Activated CD4-positive, alpha-beta memory T cell treated with anti-CD3 and anti-CD28 coated beads for 36 hours (primary cell): ENCODE measurements at regions of chr6 and their contacts with region 1.

Region 1: DNA sequence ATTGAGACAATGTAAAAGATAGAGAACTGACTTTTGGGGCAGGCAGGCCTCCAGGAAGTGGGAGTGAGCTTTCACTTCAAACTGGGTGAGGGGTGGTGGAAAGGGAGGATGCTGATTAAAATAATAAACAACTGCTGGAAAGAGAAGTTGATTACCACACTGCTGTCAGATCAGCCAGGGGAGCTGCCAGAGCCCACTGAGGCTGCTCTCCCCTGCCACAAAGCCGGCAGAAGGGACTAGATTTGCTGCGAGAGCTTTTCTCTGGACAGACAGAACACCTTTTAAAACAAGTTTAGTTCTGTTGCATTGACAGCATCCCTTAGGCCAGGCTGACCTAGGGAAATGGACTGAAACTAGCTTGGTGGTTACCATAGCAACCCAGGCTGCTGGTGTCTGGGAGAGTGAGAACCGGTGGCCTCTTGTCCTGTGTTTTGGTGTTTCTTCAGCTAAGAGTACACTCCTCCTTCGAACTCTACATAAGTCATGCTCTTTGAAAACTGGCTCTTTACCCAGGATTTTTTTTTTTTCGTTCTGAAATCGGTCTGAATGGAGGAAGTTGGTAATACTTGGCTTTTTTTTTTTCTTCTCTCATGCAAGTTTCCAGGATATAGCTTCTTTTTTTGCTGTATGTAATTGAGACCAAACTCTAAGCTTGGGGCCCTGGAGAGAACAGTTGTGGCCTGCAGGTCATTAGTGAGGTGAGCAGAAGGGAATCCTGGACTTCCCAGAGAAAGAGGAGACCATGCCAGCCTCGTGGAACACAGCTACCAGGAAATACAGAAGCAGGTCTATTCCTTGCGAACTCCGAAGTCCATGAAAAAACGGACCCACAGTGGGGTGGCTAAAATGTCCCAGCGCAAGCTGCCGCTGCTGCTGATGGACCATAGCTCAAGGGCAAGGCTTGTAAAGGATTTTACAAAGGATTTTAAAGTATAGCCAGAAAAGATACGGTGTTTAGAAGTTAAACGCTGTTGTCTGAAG is 374.4 kb downstream of the UTRN start:
- DNase-seq: peak; percentile 19
- H3K4me3 Mint-ChIP-seq: peak overlapping the region; percentile 52
- H3K27ac Mint-ChIP-seq: peak overlapping the region; percentile 81
- H3K4me1 Mint-ChIP-seq: peaks cover 64% of the 10 kb centered on the region
- H3K27me3 Mint-ChIP-seq: no peaks in the 10 kb centered on the region

Region 2: DNA sequence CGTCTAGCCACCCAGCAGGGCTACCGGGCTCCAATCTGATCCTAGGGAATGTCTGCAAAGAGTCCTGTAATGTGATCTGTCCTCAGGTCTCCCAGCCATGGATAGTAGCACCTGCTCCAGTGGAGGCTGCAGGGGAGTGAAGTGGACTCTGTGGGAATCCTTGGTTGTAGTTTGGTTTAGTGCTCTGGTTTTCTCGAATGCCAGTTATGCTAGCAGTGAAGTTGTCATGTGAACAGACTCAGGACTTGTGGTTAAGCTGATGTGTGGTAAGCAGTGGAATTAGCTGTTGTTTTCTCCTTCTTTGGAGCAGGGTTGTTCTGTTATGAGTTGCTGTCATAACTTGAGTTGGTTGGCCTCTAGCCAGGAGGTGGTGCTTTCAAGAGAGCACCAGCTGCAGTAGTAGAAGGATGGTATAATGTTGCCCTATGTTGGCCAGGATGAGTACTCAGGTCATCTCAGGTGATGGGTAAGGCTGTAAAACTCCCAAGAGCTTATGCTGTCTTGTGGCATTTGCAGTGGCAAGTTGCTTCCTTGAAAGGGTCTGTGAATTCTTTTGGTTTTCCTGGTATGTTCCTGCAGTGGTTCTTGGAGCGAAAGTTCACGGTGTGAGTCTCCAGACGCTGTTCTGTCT is 15.9 kb after region 1 on chr6:
- CTCF ChIA-PET with region 1: interaction called, 4 read pairs
- POLR2A ChIA-PET with region 1: no interaction called
- intact Hi-C with region 1: loop called (anchors 2 kb)
- DNase-seq: peak; percentile 66
- H3K4me3 Mint-ChIP-seq: no peak overlapping the region
- H3K27ac Mint-ChIP-seq: no peak overlapping the region
- H3K4me1 Mint-ChIP-seq: peaks cover 19% of the 10 kb centered on the region
- H3K27me3 Mint-ChIP-seq: no peaks in the 10 kb centered on the region

Region 3: GRCh38 chr6:144689503-144690075 is 30.1 kb after region 1 on chr6:
- CTCF ChIA-PET with region 1: no interaction called
- POLR2A ChIA-PET with region 1: no interaction called
- intact Hi-C with region 1: no loop called
- DNase-seq: no peak
- H3K4me3 Mint-ChIP-seq: no peak overlapping the region
- H3K27ac Mint-ChIP-seq: no peak overlapping the region
- H3K4me1 Mint-ChIP-seq: peaks cover 10% of the 10 kb centered on the region
- H3K27me3 Mint-ChIP-seq: no peaks in the 10 kb centered on the region

Region 4: DNA sequence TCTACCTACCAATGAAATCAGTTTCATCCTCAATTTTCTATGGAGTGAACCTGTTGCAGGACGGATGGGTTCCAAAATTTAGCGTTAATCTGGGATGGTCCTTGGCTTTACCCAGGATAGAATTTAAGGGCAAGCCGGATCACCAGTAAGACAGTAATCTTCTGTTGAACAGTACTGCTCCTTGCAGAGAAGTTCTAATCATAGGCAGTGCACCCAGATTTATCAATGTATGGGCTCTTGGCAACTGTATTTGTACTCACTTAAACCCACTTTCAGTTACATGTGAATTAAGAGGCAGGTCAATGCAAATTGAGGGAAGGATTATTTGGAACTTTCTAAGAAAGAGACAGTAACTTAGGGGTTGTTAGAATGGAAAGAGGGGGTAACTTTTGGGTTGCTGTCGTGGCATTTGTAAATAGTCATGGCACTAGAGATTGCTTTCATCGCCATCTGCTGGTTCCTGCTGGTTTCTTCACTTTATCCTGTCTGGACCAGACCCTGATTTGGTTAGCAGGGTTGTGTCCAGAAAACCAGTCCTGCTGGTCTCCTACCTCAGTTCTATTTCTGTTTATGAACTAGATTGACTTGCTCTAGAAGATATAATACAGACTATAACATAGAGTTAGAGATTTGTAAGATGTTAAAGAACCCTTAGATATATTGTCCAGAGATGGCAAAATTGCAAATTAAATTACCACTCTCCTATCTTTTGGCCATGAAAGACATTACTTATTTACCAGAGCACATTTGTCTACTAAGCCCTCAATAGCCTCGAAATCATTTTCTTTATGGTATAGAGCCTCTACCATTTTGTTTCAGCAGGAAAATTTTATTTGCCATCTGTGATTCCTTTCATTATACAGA is 271.9 kb after region 1 on chr6:
- CTCF ChIA-PET with region 1: no interaction called
- POLR2A ChIA-PET with region 1: no interaction called
- intact Hi-C with region 1: loop called (anchors 5 kb)
- DNase-seq: peak; percentile 48
- H3K4me3 Mint-ChIP-seq: no peak overlapping the region
- H3K27ac Mint-ChIP-seq: no peak overlapping the region
- H3K4me1 Mint-ChIP-seq: no peaks in the 10 kb centered on the region
- H3K27me3 Mint-ChIP-seq: no peaks in the 10 kb centered on the region